A549 (cell line): ENCODE measurements at regions of chr5 and their contacts with region 1.

Region 1: DNA sequence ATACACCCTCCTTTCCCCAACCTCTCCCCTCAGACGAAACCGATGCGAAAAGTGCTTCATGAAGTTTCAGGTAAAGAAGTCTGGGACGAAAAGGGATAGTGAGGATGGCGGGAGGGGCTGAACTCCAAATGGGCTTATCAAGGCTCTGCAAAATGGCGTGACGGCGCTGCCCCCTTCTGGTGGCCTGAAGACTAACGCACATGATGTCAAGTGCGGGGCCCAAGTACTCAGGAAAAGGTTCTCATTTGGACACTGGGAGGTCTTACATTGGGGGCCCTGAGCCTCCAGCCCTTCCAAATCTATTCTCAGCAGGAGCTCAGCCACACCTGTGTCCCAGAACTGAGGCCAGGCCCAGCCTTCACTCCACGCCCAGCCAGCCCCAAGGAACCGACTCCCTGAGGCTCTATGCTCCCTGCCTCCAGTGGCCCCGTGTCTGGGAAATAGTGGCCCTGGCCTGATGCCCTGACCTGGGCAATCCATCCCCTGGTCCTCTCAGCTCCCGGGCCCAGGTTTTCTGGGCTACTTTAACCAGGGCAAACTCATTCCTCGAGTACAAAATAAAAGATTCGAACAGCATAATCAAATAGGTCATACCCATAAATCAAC is 119.9 kb downstream of the KCNIP1 start:
- DNase-seq: peak; percentile 59 to 78
- ATAC-seq: peak; percentile 63 to 93; a peak in 5 of 6 replicates
- H3K4me3 ChIP-seq: no peak overlapping the region
- H3K27ac ChIP-seq: no peak overlapping the region
- H3K4me1 ChIP-seq: no peaks in the 10 kb centered on the region
- CTCF ChIP-seq: peak; percentile 58
- EP300 ChIP-seq: no peak
- POLR2A ChIP-seq: no peak
- RAD21 ChIP-seq: peak; percentile 86 to 95

Region 2: GRCh38 chr5:170225326-170226128 is 398.2 kb before region 1 on chr5:
- CTCF ChIA-PET with region 1: interaction called, 50 read pairs
- POLR2A ChIA-PET with region 1: no interaction called
- DNase-seq: peak; percentile 66 to 68
- ATAC-seq: peak; percentile 82 to 96; a peak in 4 of 6 replicates
- H3K4me3 ChIP-seq: no peak overlapping the region
- H3K27ac ChIP-seq: no peak overlapping the region
- H3K4me1 ChIP-seq: peaks cover 1% of the 10 kb centered on the region
- CTCF ChIP-seq: peak; percentile 85
- EP300 ChIP-seq: no peak
- POLR2A ChIP-seq: no peak
- RAD21 ChIP-seq: peak; percentile 86 to 90

Region 3: GRCh38 chr5:170420780-170421412 is 202.8 kb before region 1 on chr5:
- CTCF ChIA-PET with region 1: interaction called, 16 read pairs
- POLR2A ChIA-PET with region 1: no interaction called
- DNase-seq: peak; percentile 71 to 79
- ATAC-seq: peak; percentile 71 to 92; a peak in 5 of 6 replicates
- H3K4me3 ChIP-seq: no peak overlapping the region
- H3K27ac ChIP-seq: no peak overlapping the region
- H3K4me1 ChIP-seq: peaks cover 7% of the 10 kb centered on the region; the same call in 2 of the 3 replicates
- CTCF ChIP-seq: peak; percentile 82
- EP300 ChIP-seq: no peak
- POLR2A ChIP-seq: no peak
- RAD21 ChIP-seq: peak; percentile 73 to 74

Region 4: GRCh38 chr5:170434966-170435605 is 188.6 kb before region 1 on chr5:
- CTCF ChIA-PET with region 1: interaction called, 508 read pairs
- POLR2A ChIA-PET with region 1: no interaction called
- DNase-seq: peak; percentile 48 to 53
- ATAC-seq: peak; percentile 83 to 95
- H3K4me3 ChIP-seq: no peak overlapping the region
- H3K27ac ChIP-seq: no peak overlapping the region
- H3K4me1 ChIP-seq: no peaks in the 10 kb centered on the region
- CTCF ChIP-seq: peak; percentile 92
- EP300 ChIP-seq: no peak
- POLR2A ChIP-seq: no peak
- RAD21 ChIP-seq: peak; percentile 97 to 98

Region 5: DNA sequence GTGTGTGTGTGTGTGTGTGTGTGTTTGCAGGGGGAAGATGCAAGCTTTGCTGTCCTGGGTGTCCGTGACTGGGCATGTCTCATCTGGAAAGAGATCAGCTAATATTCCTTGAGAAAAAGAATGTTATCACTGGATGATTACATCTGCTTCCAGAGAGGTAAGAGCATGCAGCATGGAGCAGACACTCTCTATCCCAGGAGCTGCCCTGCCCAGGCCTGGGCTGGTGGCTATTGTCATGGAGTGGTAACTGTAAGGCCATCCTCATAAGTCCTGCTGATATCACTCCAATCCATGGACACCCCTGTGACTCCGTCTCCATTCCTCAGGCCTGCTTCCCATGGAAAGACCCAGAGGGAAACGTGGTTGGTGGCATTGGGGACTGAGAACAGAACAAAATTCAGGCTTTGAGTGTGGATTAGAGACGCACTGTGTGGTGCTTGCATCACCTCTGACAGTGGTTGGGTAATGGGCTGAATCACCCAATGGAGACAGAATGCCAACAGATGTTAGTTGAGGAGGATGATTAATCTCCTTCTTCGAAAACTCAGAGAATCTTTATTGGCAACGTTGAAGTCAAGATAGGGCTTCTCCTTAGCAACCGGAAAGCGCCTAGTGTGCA is 171.8 kb before region 1 on chr5:
- CTCF ChIA-PET with region 1: interaction called, 13 read pairs
- POLR2A ChIA-PET with region 1: no interaction called
- DNase-seq: peak; percentile 28 to 40
- ATAC-seq: peak; percentile 90 to 95
- H3K4me3 ChIP-seq: no peak overlapping the region
- H3K27ac ChIP-seq: peak overlapping the region in 1 of 2 experiments; percentile 70; a peak in 3 of 6 replicates
- H3K4me1 ChIP-seq: peaks cover 11% of the 10 kb centered on the region
- CTCF ChIP-seq: no peak
- EP300 ChIP-seq: no peak
- POLR2A ChIP-seq: no peak
- RAD21 ChIP-seq: no peak

Region 6: DNA sequence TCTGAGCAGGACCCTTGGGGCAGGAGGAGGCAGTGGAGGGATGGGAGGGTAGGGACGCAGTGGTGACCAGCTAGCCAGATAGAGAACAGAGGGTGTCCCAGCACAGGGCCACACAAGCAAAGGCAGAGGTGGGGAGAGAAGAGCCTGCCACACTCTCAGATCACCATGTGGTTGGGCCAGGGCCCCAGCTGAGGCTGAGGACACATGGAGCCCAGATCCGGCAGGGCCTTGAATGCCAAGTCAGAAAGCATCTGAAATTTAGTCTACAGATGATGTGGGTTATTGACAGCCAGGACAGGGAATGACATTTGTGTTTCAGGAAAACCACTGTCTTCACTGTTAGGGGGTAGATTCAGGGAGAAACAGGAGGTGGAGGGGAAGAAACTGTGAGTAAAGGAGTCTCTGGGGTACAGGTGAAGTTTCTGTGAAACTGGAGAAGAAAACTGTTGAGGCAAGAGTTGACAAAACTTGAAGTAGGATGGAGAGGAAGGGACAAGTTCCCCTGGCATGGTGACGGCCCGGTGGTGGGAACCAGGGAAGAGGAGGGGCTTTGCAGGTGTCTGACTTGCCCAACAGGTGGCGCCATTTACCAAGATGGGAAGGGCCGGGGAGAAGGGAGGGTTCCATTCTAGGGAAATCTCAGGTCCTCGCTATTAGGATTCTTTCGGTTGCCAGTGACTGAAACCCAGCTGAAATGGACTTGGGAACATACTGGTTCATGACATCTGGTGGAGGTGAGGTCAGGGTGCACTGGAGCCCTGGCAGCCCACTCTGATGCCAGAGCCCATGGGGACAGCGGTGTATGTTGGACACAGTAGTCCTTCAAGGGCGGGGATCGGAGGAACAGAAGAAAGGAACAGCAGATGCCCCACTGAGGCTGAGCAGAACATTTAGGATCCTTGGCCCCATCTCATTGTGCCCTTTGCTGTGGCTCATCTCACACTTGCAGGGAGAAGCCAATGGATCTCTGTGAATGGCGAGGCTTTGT is 19.8 kb before region 1 on chr5:
- CTCF ChIA-PET with region 1: interaction called, 15 read pairs
- POLR2A ChIA-PET with region 1: no interaction called
- DNase-seq: peak; percentile 58 to 90
- ATAC-seq: peak; percentile 75 to 96; a peak in 5 of 6 replicates
- H3K4me3 ChIP-seq: no peak overlapping the region
- H3K27ac ChIP-seq: no peak overlapping the region
- H3K4me1 ChIP-seq: no peaks in the 10 kb centered on the region
- CTCF ChIP-seq: peak; percentile 57
- EP300 ChIP-seq: no peak
- POLR2A ChIP-seq: no peak
- RAD21 ChIP-seq: peak; percentile 55 to 84; a peak in 4 of 5 replicates